K562 (cell line): ENCODE measurements at regions of chr15 and their contacts with region 1.

Region 1: GRCh38 chr15:88476635-88477060 is 9.1 kb downstream of the MRPS11 start:
- DNase-seq: peak; percentile 59 to 68 (median 64)
- ATAC-seq: peak; percentile 89
- H3K4me3 ChIP-seq: no peak overlapping the region
- H3K27ac ChIP-seq: no peak overlapping the region
- H3K4me1 ChIP-seq: no peaks in the 10 kb centered on the region
- H3K27me3 ChIP-seq: no peaks in the 10 kb centered on the region
- CTCF ChIP-seq: peak; percentile 76 to 85 (median 79)
- EP300 ChIP-seq: 0 out of 2 replicates have a peak, but pooled peaks have one; percentile 20
- POLR2A ChIP-seq: no peak
- RAD21 ChIP-seq: peak; percentile 88 to 90

Region 2: DNA sequence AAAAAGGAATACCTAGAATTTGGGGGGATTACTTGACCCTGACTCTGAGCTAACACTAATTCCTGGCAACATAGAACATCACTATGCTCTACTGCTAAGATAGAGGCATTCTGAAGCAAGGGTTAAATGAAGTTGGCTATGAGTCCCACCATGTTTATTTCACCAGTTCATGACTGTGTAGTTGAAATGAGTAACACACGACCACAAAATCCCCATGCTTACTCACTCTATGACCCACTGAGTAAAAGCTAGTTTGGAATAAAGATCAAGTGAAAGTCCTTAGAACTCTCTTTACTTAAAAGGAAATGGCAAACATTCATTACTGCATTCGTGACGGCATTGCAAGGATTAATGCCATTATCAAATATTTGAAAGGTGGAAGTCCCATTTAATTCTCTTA is 56.8 kb before region 1 on chr15:
- CTCF ChIA-PET with region 1: no interaction called
- POLR2A ChIA-PET with region 1: no interaction called
- in situ Hi-C with region 1: no loop called
- intact Hi-C with region 1: no loop called
- DNase-seq: no peak
- ATAC-seq: no peak
- H3K4me3 ChIP-seq: no peak overlapping the region
- H3K27ac ChIP-seq: no peak overlapping the region
- H3K4me1 ChIP-seq: no peaks in the 10 kb centered on the region
- H3K27me3 ChIP-seq: no peaks in the 10 kb centered on the region
- CTCF ChIP-seq: no peak
- EP300 ChIP-seq: no peak
- POLR2A ChIP-seq: no peak
- RAD21 ChIP-seq: no peak

Region 3: GRCh38 chr15:88610701-88611231 is 134.1 kb after region 1 on chr15:
- CTCF ChIA-PET with region 1: interaction called, 34 read pairs
- POLR2A ChIA-PET with region 1: interaction called, 3 read pairs
- in situ Hi-C with region 1: loop called (anchors 5 kb)
- intact Hi-C with region 1: loop called (anchors 1 kb)
- DNase-seq: no peak
- ATAC-seq: peak; percentile 18; the same call in 1 of the 3 replicates
- H3K4me3 ChIP-seq: no peak overlapping the region
- H3K27ac ChIP-seq: no peak overlapping the region
- H3K4me1 ChIP-seq: peaks cover 0 to 11% of the 10 kb centered on the region in 2 experiments; a peak in 2 of 5 replicates
- H3K27me3 ChIP-seq: peaks cover 8 to 26% of the 10 kb centered on the region in 2 experiments; a peak in 4 of 5 replicates
- CTCF ChIP-seq: no peak
- EP300 ChIP-seq: no peak
- POLR2A ChIP-seq: no peak
- RAD21 ChIP-seq: no peak

Region 4: DNA sequence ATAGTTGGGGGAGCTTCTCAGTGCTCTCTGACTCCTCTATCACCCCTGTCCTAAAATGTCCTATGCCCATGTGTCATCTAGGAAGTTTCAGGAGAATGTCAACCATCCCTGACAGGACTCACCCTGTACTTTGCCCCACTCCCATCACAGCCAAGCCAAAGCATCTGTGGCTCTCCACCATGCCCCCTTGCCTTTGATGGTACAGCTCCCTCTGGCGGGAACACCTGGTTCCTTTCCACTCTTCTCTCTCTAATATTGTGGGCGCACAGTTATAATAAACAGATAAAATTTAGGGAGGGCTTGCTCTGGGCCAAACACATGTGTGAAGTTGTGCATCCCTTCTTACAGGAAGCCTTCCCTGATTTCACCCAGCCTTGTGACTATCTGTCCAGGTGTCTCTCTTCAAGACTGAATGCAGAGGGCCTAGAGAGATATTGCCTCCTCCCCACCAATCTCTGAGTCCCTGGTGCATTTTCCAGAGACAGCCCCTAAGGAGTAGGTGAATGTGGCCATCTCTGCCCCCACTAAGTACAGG is 225.0 kb after region 1 on chr15:
- CTCF ChIA-PET with region 1: interaction called, 5 read pairs
- POLR2A ChIA-PET with region 1: no interaction called
- in situ Hi-C with region 1: no loop called
- intact Hi-C with region 1: loop called (anchors 2 kb)
- DNase-seq: peak; percentile 42 to 49 (median 46)
- ATAC-seq: peak; percentile 91
- H3K4me3 ChIP-seq: no peak overlapping the region
- H3K27ac ChIP-seq: no peak overlapping the region
- H3K4me1 ChIP-seq: peaks cover 0 to 5% of the 10 kb centered on the region in 2 experiments; a peak in 1 of 5 replicates
- H3K27me3 ChIP-seq: peaks cover 32 to 46% of the 10 kb centered on the region in 2 experiments
- CTCF ChIP-seq: peak; percentile 65 to 75 (median 65)
- EP300 ChIP-seq: no peak
- POLR2A ChIP-seq: no peak
- RAD21 ChIP-seq: peak; percentile 36 to 67

Region 5: DNA sequence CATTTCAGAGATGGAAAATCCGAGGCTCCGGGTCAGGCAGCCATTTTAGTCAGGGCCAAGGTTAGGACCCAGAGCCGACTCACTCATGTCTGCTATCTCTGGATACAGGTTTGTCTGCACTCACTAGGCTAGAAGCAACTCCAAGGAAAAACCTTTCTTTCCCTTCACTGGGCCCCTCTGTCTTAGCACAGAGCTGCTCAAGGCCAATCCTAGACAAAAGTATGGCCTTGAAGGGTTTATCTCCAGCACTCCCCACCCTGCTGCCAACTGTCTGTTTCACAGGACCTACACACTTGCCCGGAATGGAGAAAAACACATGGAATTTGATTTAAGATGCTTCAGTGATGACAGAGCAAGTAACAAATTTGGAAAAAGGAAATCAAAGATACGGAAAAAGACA is 352.1 kb after region 1 on chr15:
- CTCF ChIA-PET with region 1: no interaction called
- POLR2A ChIA-PET with region 1: no interaction called
- in situ Hi-C with region 1: loop called (anchors 10 kb)
- intact Hi-C with region 1: no loop called
- DNase-seq: no peak
- ATAC-seq: no peak
- H3K4me3 ChIP-seq: no peak overlapping the region
- H3K27ac ChIP-seq: no peak overlapping the region
- H3K4me1 ChIP-seq: no peaks in the 10 kb centered on the region
- H3K27me3 ChIP-seq: peaks cover 10 to 40% of the 10 kb centered on the region in 2 experiments; a peak in 3 of 5 replicates
- CTCF ChIP-seq: no peak
- EP300 ChIP-seq: no peak
- POLR2A ChIP-seq: no peak
- RAD21 ChIP-seq: no peak

Region 6: GRCh38 chr15:88834211-88834812 is 357.7 kb after region 1 on chr15:
- CTCF ChIA-PET with region 1: interaction called, 3 read pairs
- POLR2A ChIA-PET with region 1: no interaction called
- in situ Hi-C with region 1: loop called (anchors 10 kb)
- intact Hi-C with region 1: loop called (anchors 1 kb)
- DNase-seq: peak; percentile 48 to 59 (median 55)
- ATAC-seq: peak; percentile 82
- H3K4me3 ChIP-seq: no peak overlapping the region
- H3K27ac ChIP-seq: no peak overlapping the region
- H3K4me1 ChIP-seq: peaks cover 0 to 8% of the 10 kb centered on the region in 2 experiments; a peak in 3 of 5 replicates
- H3K27me3 ChIP-seq: peaks cover 8 to 33% of the 10 kb centered on the region in 2 experiments; a peak in 4 of 5 replicates
- CTCF ChIP-seq: peak; percentile 76 to 87 (median 79)
- EP300 ChIP-seq: no peak
- POLR2A ChIP-seq: no peak
- RAD21 ChIP-seq: peak; percentile 84 to 91